Heart right ventricle (tissue), 16 donors: ENCODE measurements at regions of chr17 and their contacts with region 1.

Region 1: DNA sequence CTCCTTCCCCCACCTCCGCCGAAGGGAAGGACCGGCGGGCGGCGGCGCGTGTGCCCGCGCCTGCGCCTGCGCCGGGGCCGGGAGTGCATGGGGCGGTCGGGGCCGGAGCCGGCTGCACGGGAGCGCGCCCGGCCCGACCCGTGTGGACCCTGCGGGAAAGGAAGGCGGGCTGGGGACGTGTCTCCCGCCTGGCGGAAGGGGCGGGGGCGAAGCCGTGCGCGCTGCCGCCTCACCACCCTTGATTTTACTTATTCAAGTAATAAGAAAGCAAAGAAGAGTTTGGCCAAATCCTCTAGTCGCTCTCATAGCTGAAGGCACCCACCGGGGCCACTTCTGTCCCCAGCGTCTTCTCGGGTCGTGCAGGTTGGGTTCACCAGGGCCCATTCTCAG is 596 bp upstream of the PFN1 start:
- DNase-seq: peak; percentile 83 to 87
- ATAC-seq: peak; percentile 72 to 87 (median 82)
- H3K4me3 ChIP-seq: peak overlapping the region; percentile 32 to 100 (median 98)
- H3K27ac ChIP-seq: peak overlapping the region; percentile 89 to 100 (median 99)
- H3K4me1 ChIP-seq: peaks cover 18 to 76% (median 51%) of the 10 kb centered on the region in 9 donors
- H3K27me3 ChIP-seq: no peaks in the 10 kb centered on the region
- CTCF ChIP-seq: no peak

Region 2: DNA sequence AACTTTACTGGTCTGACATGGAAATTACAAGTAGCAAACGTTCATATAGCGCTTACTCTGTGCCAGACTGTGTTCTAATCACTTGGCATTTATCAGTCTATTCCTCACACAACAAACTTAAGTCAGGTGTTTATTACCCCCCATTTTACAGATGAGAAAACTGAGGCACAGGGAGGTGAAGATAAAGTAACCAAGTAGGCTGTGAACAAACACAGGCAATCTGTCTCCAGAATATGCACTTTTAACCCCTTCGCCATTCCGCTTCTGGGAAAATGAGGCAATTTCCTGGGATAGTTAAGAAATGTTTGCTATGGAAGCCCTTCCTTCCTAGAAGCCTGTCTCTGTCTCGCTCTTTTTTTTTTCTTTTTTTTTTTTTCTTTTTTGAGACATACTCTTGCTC is 197.0 kb before region 1 on chr17:
- intact Hi-C with region 1: no loop called
- DNase-seq: no peak
- ATAC-seq: no peak
- H3K4me3 ChIP-seq: no peak overlapping the region
- H3K27ac ChIP-seq: no peak overlapping the region
- H3K4me1 ChIP-seq: peaks cover 0 to 34% (median 10%) of the 10 kb centered on the region in 9 donors
- H3K27me3 ChIP-seq: peaks cover 0 to 56% (median 38%) of the 10 kb centered on the region in 7 donors
- CTCF ChIP-seq: no peak

Region 3: DNA sequence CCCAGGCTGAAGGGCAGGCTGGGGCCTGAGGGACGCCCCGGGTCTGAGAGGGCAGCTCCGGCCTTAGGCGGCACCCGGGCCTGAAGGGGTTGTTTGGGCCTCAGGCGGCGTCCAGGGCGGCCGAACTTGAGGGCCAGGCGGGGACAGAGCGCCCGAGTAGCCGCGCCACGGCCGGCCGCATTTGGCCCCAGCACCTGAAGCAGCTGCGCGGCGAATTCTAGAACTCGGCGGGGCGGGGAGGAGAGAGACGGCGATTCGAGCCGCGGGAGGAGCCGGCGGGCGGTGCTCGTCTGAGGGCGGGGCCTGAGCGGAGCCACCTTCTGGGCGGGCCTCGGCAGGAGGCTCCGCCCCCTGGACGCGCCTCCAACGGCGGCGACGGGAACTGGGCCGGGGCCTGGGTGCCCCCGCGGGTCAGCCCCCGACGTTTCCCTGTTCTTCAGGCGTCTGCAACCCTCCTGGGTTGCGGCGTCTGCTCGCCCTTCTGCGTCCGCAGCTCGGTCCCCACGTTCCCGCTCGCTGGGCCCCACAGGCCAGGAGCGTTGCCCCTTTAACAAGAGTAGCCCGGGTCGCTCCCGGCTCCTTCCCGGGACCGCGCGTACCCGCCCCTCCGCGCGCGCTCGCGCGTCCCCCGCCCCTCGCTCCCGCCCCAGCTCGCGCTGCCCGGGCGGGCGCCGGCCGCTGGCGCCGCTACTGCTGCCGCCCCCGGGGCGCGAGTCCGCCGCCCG is 48.5 kb after region 1 on chr17 and contains the starts of genes INCA1 and KIF1C:
- intact Hi-C with region 1: loop called in 1 of 10 experiments (anchors 5 kb)
- DNase-seq: peak; percentile 94 to 95
- ATAC-seq: peak; percentile 88 to 96 (median 92)
- H3K4me3 ChIP-seq: peak within 1 kb of the TSS; percentile 67 to 100 (median 95)
- H3K27ac ChIP-seq: peak within 1 kb of the TSS; percentile 87 to 97 (median 94)
- H3K4me1 ChIP-seq: peaks cover 18 to 44% (median 30%) of the 10 kb centered on the region in 9 donors
- H3K27me3 ChIP-seq: no peaks in the 10 kb centered on the region
- CTCF ChIP-seq: peak in 6 of 9 donors; percentile 9 to 26 (median 22)
- total RNA-seq, gene INCA1: 1.8 to 2.9 (median 2.2) TPM
- total RNA-seq, gene KIF1C: 565 to 826 (median 598) TPM